Right ventricle myocardium inferior (tissue), 1 donor: ENCODE measurements at regions of chr3 and their contacts with region 1.

Region 1: GRCh38 chr3:4730719-4731118 is 237.6 kb downstream of the ITPR1 start:
- DNase-seq: no peak
- ATAC-seq: peak; percentile 47

Region 2: GRCh38 chr3:4680881-4681300 is 49.8 kb before region 1 on chr3:
- intact Hi-C with region 1: no loop called
- DNase-seq: no peak
- ATAC-seq: no peak

Region 3: DNA sequence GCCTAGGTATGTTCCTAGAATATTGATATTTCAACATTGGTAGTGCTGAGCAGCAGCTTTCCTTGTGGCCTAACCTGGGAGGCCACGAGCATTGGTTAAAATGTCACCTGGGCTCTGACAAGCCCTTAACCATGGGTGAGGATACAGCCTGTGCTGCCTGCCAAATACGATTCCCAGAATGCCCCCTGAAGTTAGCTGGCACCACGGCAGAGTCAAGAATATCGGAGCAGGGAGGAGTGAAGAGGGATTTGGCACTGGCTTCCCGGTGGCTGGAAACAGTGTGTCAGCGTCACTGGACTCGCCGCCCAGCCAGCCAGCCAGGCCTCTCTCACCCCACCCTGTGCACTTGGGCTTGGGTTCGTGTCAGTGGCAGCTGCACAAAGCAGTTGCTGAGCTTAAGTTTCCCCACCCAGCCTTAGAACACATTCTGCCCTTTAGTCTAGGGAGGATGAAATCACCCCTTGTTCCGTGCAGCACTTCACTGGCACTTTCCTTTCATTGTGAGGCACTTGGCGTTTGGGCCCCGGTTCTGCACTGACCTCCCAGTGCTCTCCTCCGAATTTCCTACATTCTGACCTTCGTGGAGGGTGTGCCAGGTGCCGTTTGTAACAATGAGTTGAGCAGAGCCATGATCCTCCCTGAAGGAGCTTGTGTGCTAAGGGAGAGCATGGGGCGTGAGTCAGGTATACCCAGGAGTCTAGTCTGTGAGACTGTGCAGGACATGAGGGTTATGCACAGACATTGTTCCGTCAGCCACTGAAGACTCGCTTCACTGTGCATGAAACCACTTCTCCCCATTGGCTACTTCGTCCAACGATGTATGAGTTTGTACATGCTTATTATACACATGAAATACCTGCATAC is 95.8 kb after region 1 on chr3:
- intact Hi-C with region 1: loop called (anchors 5 kb)
- DNase-seq: peak; percentile 84
- ATAC-seq: peak; percentile 89